Activated T-helper 1 cell treated with anti-CD3 and anti-CD28 coated beads, Interleukin-12 subunit alpha, Interleukin-12 subunit beta, Interleukin-2, Interleukin-4 antibody, amounts not matched to agents 30 ng/mL and 10 ng/mL and 1 ng/mL, durations not matched to agents 14 hours and 24 hours and 36 hours (primary cell): ENCODE measurements at regions of chr1 and their contacts with region 1.

Region 1: DNA sequence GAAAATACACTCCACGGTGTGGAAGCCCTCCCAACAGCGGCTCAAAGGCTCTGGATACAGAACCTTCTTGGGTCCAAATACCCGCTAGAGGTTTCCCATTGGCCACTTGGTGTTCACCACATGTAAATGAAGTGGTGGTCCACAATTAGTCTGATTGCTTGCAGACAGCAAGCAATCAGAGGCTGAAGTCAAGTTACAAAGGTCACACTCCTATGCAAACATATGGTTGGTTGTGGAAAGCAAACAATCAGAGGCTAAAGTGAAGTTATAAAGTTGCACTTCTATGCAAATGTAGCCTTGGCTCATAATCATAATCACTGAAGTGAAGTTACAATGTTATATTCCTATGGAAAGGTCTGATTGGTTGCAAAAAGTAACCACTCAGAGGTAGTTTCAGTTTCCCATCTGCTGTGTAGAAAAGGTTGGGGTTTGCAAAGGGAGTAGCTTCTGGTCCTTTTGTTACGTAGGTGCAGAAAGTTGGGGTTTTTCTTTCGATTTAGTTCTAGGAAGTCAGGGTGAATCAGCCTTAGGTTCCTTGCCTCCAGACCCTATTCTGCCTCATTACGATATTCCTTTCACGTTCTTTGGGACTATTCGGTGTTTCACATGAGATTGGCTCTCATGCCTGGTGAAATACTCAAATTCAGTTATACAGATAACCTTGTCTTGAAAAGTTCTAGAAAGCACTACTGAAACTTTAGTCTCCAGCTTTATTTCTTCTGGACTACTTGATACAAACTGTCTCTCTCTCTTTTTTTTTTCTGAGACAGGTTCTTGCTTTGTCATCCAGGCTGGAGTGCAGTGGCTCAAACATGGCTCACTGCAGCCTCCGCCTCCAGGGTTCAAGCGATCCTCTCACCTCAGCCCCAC is 36.7 kb upstream of the MTF2 start:
- DNase-seq: peak; percentile 53
- H3K4me3 Mint-ChIP-seq: peak overlapping the region; percentile 74
- H3K27ac Mint-ChIP-seq: peak overlapping the region; percentile 84
- H3K4me1 Mint-ChIP-seq: peaks cover 37% of the 10 kb centered on the region
- H3K27me3 Mint-ChIP-seq: no peaks in the 10 kb centered on the region

Region 2: GRCh38 chr1:92975551-92976232 is 66.7 kb before region 1 on chr1:
- intact Hi-C with region 1: loop called (anchors 5 kb)
- DNase-seq: no peak
- H3K4me3 Mint-ChIP-seq: peak overlapping the region; percentile 3
- H3K27ac Mint-ChIP-seq: peak overlapping the region; percentile 70
- H3K4me1 Mint-ChIP-seq: peaks cover 80% of the 10 kb centered on the region
- H3K27me3 Mint-ChIP-seq: no peaks in the 10 kb centered on the region